ENCODE measurements at regions of chr2 and their contacts with region 1.

Region 1: DNA sequence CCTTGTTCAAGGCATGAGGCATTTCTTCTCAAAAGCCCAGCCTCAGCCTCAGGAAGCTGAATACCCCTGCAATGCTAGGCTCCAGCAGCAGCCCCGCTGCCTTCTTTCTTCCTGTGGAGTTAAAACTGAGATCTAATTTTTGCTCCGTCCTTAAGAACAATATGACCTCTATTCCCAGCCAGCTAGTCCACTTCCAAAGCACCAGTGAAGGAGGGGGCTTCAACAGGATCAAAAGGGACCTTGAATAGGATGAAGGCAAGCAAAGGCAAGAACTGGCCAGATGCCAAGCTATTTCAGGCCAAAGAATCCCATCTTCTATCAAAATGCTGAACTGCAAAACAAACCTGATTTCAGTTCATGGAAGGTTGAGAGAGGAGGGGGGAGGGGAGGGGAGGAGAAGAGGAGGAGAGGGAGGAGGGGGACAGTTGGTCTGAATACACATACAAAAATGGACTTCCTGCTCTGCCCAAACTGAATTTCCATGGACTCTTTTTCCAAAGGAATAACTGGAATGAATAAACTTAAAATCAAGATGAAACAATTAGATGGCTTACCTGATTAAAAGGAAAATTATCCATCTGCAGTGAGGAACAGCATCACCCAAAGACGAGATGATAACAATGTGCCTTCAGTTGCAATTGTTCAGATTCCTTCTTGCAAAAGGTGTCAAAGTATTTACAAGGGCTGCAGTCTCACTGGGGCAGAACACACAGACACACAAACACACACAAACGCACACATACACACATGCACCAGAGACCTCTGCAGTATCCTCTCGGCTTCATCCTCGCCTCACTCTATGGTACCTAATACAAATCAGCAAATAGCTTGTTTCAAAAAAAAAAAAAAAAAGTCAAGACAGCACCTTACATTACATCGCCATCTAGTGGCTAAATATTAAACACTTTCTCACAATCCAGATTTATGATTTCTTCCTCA is at the start of gene SCN1A:
- DNase-seq: no peak
- H3K4me3 ChIP-seq: no peak within 1 kb of the TSS
- H3K27ac ChIP-seq: no peak within 1 kb of the TSS
- H3K4me1 ChIP-seq: no peaks in the 10 kb centered on the region
- H3K27me3 ChIP-seq: no peaks in the 10 kb centered on the region
- CTCF ChIP-seq: peak in 5 of 6 experiments; percentile 3 to 72 (median 45)
- POLR2A ChIP-seq: no peak
- total RNA-seq, gene SCN1A: not detected

Region 2: DNA sequence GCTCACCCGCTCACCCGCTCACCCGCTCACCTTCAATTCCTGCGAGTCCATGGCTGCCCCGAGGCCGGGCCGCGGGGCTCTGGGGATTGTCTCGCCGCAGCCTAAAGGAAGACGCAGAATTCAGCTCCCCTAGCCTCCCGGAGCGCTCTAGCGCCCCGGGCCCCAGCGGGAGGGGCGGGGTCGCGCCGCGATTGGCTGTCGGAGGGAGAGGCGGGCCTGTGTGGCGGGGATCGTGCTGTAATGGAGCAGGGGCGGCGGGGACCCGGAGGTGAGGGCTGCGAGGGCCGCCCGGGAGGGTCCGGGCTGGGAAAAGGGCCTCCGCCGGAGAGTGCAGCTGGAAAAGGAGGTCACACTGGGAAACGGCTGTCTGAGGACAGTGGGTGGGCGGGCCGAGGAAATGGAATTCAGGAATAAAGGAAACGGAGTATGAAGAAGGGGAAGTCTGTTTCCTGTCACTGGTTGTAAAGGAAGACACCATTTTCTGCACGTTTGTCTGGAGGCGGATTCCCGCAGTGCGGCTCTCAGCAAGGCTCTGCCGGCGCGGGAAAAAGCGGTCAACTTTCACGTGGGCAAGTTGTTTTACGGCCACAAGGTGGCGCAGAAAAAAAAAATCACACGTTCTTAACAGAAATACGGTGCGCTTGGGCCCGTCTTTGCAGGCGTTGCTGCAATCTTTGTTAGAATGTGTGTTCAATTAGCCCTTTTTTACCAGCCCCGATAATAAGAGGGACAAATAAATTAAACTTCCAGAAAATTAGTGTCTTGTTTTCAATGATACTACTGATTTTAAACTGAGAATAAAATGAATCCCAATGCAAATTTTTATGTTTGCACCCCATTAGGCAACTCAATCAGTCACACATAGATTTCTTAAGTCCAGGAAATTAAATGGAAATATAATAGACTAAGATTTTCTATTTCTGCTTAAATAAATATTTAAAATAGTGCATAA is 173.6 kb before region 1 on chr2 and contains the start of gene TTC21B:
- intact Hi-C with region 1: loop called (anchors 10 kb)
- DNase-seq: peak; percentile 95 to 97
- H3K4me3 ChIP-seq: peak within 1 kb of the TSS; percentile 42 to 56 (median 55)
- H3K27ac ChIP-seq: peak within 1 kb of the TSS; percentile 65 to 87 (median 72)
- H3K4me1 ChIP-seq: peaks cover 15 to 17% of the 10 kb centered on the region in 2 donors
- H3K27me3 ChIP-seq: no peaks in the 10 kb centered on the region
- CTCF ChIP-seq: peak; percentile 57 to 92 (median 70)
- POLR2A ChIP-seq: peak in 1 of 2 donors; percentile 86
- total RNA-seq, gene TTC21B: 29.1 to 45.7 (median 32.9) TPM

Region 3: GRCh38 chr2:166197446-166197845 is 70.0 kb after region 1 on chr2:
- intact Hi-C with region 1: no loop called
- DNase-seq: no peak
- H3K4me3 ChIP-seq: no peak overlapping the region
- H3K27ac ChIP-seq: no peak overlapping the region
- H3K4me1 ChIP-seq: no peaks in the 10 kb centered on the region
- H3K27me3 ChIP-seq: no peaks in the 10 kb centered on the region
- CTCF ChIP-seq: no peak
- POLR2A ChIP-seq: no peak

Region 4: GRCh38 chr2:166464187-166464586 is 336.7 kb after region 1 on chr2:
- intact Hi-C with region 1: no loop called
- DNase-seq: no peak
- H3K4me3 ChIP-seq: no peak overlapping the region
- H3K27ac ChIP-seq: no peak overlapping the region
- H3K4me1 ChIP-seq: no peaks in the 10 kb centered on the region
- H3K27me3 ChIP-seq: no peaks in the 10 kb centered on the region
- CTCF ChIP-seq: no peak
- POLR2A ChIP-seq: no peak

Measured in thyroid gland (tissue), 4 donors.